Activated CD4-positive, alpha-beta T cell treated with anti-CD3 and anti-CD28 coated beads for 36 hours (primary cell): ENCODE measurements at regions of chr11 and their contacts with region 1.

Region 1: DNA sequence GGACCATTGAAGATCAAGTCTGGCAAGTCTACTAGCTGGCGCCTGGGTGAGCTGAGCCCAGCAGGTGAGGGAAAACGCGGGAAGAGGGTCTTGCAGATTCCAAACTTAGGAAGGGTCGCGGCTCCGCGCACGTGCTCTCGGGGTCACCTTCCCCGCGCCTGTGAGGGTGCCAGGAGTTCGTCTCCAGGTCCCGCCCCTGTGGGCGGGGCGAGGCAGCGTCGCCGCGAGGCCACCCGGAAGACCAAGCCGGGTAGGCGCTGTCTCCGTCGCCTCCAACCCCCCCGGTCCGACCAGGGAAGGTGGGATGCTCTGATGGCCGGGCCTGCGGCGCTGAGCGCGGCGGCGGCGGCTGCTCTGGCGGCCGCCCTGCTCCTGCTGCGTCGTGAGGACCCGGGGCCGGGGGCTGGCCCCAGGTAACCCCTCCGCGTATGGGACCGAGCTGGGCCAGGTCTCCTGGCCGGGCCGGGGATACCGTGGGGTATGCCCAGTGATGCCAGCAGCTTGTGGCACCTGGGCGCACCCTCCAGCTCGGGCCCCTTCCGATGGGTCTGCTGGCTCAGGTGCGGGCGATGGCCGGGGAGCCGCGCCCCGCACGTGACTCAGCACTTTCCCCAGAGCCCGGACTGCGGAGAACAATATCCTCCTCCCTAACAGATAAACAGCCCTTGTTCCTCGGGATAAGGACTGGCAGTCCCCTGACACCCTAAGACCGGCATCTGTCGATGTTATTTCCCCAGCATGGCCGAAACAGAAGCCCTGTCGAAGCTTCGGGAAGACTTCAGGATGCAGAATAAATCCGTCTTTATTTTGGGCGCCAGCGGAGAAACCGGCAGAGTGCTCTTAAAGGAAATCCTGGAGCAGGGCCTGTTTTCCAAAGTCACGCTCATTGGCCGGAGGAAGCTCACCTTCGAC is at the start of gene HTATIP2:
- DNase-seq: peak; percentile 82
- ATAC-seq: peak; percentile 79
- H3K4me3 Mint-ChIP-seq: peak within 1 kb of the TSS; percentile 76
- H3K27ac Mint-ChIP-seq: peak within 1 kb of the TSS; percentile 92
- H3K4me1 Mint-ChIP-seq: peaks cover 68% of the 10 kb centered on the region
- H3K27me3 Mint-ChIP-seq: no peaks in the 10 kb centered on the region
- total RNA-seq, gene HTATIP2: 41.4 to 60.4 TPM

Region 2: DNA sequence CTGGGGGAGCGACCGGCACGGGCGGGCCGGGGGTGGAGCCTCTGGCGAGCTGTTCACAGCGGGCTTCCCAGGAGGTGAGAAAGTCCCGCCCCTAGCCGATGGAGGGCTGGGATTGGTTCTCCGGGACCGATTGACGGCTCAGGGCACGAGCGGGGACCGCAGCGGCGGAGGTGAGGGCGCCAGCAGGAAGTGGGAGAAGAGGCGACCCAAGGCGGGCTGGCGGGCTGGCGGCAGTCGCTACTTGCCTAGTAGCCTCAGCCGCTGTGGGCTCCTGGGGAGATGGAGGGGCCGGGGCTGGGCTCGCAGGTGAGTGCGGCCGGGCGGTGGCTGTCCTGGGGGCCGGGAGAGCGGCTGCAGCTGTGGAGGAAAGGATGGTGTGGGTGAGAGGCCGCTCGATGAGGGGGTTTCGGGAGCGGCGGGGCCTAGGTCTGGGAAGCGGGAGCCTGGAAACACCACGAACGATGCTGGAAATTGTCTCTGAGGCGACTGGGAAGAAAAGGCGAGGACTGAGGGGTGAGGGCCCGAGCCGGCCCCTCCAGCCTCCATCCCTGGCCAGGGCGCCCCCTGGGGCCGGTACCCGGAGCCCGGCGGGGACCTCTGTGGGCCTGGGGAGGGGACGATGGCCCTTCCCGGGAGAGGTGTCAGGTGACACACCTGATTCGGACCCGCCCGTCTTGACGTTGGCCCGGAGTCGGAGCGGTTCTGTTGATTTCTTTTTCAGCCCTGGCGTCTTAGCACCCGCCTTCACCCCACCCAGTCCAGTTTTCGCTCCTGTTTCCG is 1246.6 kb before region 1 on chr11 and contains the start of gene ZDHHC13:
- CTCF ChIA-PET with region 1: no interaction called
- POLR2A ChIA-PET with region 1: no interaction called
- intact Hi-C with region 1: loop called in 1 of 2 experiments (anchors 5 kb)
- DNase-seq: peak; percentile 97
- ATAC-seq: peak; percentile 99
- H3K4me3 Mint-ChIP-seq: peak within 1 kb of the TSS; percentile 89
- H3K27ac Mint-ChIP-seq: peak within 1 kb of the TSS; percentile 87
- H3K4me1 Mint-ChIP-seq: peaks cover 51% of the 10 kb centered on the region
- H3K27me3 Mint-ChIP-seq: no peaks in the 10 kb centered on the region
- total RNA-seq, gene ZDHHC13: 22.9 to 25.9 TPM

Region 3: GRCh38 chr11:19978668-19979518 is 384.9 kb before region 1 on chr11:
- CTCF ChIA-PET with region 1: no interaction called
- POLR2A ChIA-PET with region 1: no interaction called
- intact Hi-C with region 1: loop called in 1 of 2 experiments (anchors 10 kb)
- DNase-seq: peak; percentile 43
- ATAC-seq: peak; percentile 90
- H3K4me3 Mint-ChIP-seq: no peak overlapping the region
- H3K27ac Mint-ChIP-seq: peak overlapping the region; percentile 75
- H3K4me1 Mint-ChIP-seq: peaks cover 12% of the 10 kb centered on the region
- H3K27me3 Mint-ChIP-seq: peaks cover 10% of the 10 kb centered on the region

Region 4: GRCh38 chr11:20406484-20406883 is 42.7 kb after region 1 on chr11:
- CTCF ChIA-PET with region 1: no interaction called
- POLR2A ChIA-PET with region 1: no interaction called
- intact Hi-C with region 1: no loop called
- DNase-seq: no peak
- ATAC-seq: no peak
- H3K4me3 Mint-ChIP-seq: no peak overlapping the region
- H3K27ac Mint-ChIP-seq: no peak overlapping the region
- H3K4me1 Mint-ChIP-seq: peaks cover 2% of the 10 kb centered on the region
- H3K27me3 Mint-ChIP-seq: no peaks in the 10 kb centered on the region

Region 5: GRCh38 chr11:20934516-20934915 is 570.8 kb after region 1 on chr11:
- CTCF ChIA-PET with region 1: no interaction called
- POLR2A ChIA-PET with region 1: no interaction called
- intact Hi-C with region 1: no loop called
- DNase-seq: no peak
- ATAC-seq: no peak
- H3K4me3 Mint-ChIP-seq: no peak overlapping the region
- H3K27ac Mint-ChIP-seq: no peak overlapping the region
- H3K4me1 Mint-ChIP-seq: no peaks in the 10 kb centered on the region
- H3K27me3 Mint-ChIP-seq: no peaks in the 10 kb centered on the region